Esophagus muscularis mucosa (tissue), 4 donors: ENCODE measurements at regions of chr7 and their contacts with region 1.

Region 1: GRCh38 chr7:12529971-12530710 is 40.4 kb upstream of the SCIN start:
- DNase-seq: no peak
- H3K4me3 ChIP-seq: no peak overlapping the region
- H3K27ac ChIP-seq: no peak overlapping the region
- H3K4me1 ChIP-seq: no peaks in the 10 kb centered on the region
- H3K27me3 ChIP-seq: no peaks in the 10 kb centered on the region
- CTCF ChIP-seq: no peak
- EP300 ChIP-seq: no peak
- POLR2A ChIP-seq: no peak

Region 2: DNA sequence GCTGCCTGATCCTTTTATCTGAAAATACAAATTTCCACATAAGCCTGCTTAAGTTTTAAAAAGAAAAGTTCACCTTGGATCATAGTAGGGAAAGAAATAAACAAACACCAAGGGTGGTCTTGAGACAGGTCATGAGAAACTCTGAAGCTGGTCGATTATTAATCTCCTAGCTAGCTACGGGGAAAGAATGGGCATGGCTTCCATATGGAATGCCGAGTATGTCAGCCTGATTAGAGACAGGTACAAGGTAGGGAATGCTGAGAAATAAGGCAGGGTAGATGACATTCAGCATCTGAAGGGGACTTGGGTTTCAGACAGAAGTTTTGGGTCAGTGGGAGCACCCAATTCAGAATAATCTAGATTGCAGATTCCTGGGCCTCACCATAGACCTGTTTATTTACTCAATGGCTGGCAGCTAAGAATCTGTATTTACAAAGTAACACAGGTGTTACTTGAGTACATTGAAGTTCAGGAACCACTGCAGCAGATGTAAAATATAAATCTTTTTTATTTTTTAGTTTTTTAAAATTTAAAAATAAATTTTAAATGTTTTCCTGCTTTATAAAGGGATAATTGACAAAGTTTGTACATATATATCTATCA is 89.4 kb after region 1 on chr7:
- intact Hi-C with region 1: loop called (anchors 5 kb)
- DNase-seq: no peak
- H3K4me3 ChIP-seq: no peak overlapping the region
- H3K27ac ChIP-seq: no peak overlapping the region
- H3K4me1 ChIP-seq: no peaks in the 10 kb centered on the region
- H3K27me3 ChIP-seq: no peaks in the 10 kb centered on the region
- CTCF ChIP-seq: no peak
- EP300 ChIP-seq: no peak
- POLR2A ChIP-seq: no peak